SK-N-SH (cell line): ENCODE measurements at regions of chr15 and their contacts with region 1.

Region 1: GRCh38 chr15:85504749-85505676 is 124.6 kb downstream of the AKAP13 start:
- DNase-seq: peak; percentile 24
- H3K4me3 ChIP-seq: no peak overlapping the region
- H3K27ac ChIP-seq: peak overlapping the region; percentile 9 to 54; a peak in 3 of 4 replicates
- H3K4me1 ChIP-seq: peaks cover 0 to 15% of the 10 kb centered on the region in 2 experiments; a peak in 2 of 4 replicates
- H3K27me3 ChIP-seq: no peaks in the 10 kb centered on the region
- CTCF ChIP-seq: peak; percentile 82
- EP300 ChIP-seq: no peak
- RAD21 ChIP-seq: peak; percentile 74

Region 2: DNA sequence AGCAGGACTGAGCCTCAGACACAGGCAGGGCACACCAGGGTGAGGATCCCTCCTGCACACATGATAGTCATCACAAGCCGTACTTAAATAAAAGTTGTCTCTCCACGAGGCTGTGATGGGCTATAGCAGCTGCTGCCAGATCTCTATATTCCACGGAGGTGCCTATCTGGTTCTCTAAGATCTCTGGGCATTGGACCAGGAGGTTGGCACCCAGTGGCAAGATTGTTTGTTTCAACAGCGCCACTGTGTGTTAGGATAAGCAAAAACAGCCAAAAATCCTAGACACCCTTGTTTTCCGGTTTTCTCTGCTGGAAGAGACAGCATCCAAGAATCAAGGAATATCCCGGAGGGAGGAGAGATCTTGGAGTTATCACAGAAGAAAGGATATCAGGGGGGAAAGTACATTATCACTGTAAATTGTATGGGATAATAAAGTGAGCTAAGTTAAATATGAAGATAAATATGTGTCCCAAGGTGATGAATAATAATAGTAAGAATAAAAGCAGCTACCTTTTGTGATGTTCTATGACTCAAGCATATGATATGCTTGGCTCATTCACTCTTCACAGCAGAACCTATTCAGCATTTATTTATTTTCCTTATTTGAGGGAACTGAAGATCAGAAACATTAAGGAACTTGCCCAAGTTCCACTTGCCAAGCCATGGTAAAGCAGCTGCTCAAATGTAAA is 215.2 kb before region 1 on chr15:
- CTCF ChIA-PET with region 1: interaction called, 21 read pairs
- POLR2A ChIA-PET with region 1: no interaction called
- DNase-seq: peak; percentile 79
- H3K4me3 ChIP-seq: no peak overlapping the region; a peak in 1 of 4 replicates
- H3K27ac ChIP-seq: no peak overlapping the region
- H3K4me1 ChIP-seq: peaks cover 0 to 3% of the 10 kb centered on the region in 2 experiments; a peak in 1 of 4 replicates
- H3K27me3 ChIP-seq: no peaks in the 10 kb centered on the region; the same call in 1 of the 2 replicates
- CTCF ChIP-seq: peak; percentile 72
- EP300 ChIP-seq: no peak
- RAD21 ChIP-seq: peak; percentile 89

Region 3: DNA sequence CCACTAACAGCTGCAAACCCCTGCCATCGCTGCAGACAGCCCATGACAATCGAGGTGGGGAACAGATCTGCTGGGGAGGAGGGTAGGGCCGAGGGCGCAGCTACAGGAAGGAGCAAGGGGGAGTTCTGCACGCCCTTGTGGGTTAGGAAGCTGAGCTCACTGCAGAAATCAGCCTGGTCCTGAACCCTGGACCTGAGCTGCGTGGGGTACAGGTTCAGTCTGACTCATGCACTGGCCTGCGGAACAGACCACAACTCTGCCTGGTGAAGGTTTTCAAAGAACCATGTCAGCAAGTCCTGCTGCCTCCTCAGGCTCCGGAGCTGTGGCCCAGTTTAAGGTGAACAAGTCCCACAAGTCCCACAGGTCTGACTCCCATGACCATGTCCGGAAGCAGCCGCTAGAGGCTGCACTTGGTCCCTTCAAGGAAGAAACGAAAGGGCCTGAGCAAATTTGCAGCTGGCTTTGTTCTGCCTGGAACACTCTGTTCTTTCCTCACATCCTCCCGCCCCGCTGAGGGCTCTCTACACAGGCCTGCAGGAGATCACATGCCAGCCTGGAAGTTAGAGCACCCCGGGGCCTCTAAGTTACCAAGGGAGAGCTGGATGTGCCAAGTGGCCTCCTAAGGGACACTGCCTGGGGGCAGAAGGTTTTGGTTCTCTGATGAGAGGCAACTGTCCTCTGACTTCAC is 174.0 kb before region 1 on chr15:
- CTCF ChIA-PET with region 1: interaction called, 10 read pairs
- POLR2A ChIA-PET with region 1: no interaction called
- DNase-seq: peak; percentile 52
- H3K4me3 ChIP-seq: no peak overlapping the region; a peak in 1 of 4 replicates
- H3K27ac ChIP-seq: peak overlapping the region; percentile 35 to 45; a peak in 1 of 4 replicates
- H3K4me1 ChIP-seq: peaks cover 17% of the 10 kb centered on the region in 2 experiments; a peak in 3 of 4 replicates
- H3K27me3 ChIP-seq: no peaks in the 10 kb centered on the region
- CTCF ChIP-seq: peak; percentile 82
- EP300 ChIP-seq: no peak
- RAD21 ChIP-seq: peak; percentile 79

Region 4: DNA sequence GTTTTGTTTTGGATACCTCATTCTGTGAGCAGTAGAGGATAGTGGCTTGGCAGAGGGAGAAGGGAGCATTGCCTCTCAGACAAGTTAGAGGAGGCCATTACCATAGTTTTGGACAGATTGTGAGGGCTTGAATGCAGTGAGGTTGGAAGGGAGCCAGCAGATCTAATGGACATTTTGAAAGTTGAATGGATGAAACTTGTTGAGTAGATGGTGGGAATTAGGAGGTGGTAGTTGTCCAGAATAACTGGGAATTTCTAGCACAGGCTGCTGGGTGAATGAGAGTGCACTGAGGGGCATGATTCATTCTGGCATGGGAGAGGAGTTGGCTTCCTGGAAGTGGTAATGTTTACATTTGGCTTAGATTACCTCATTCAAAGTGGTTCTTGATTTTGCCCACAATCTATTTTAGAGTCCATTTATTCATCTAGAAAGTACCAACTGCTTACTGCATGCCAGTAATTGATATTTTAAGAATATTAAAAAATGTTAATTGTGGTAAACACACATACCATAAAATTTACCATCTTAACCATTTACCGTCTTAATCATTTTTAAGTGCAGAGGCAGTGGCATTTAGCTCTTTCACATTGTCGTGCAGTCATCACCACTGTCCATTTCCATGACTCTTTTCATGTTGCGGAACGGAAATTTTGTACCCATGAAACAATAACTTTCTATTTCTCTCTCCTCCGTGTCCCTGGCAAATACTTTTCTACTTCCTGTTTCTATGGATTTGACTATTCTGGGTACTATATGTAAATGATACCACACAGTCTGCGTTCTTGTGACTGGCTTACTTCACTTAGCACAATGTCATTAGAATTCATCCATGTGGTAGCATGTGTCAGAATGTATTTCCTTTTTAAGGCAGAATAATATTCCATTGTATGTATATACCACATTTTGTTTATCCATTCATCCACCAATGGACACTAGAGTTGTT is 96.9 kb before region 1 on chr15:
- CTCF ChIA-PET with region 1: no interaction called
- POLR2A ChIA-PET with region 1: no interaction called
- DNase-seq: no peak
- H3K4me3 ChIP-seq: no peak overlapping the region
- H3K27ac ChIP-seq: peak overlapping the region in 1 of 2 experiments; percentile 93; a peak in 2 of 4 replicates
- H3K4me1 ChIP-seq: peaks cover 5 to 43% of the 10 kb centered on the region in 2 experiments
- H3K27me3 ChIP-seq: no peaks in the 10 kb centered on the region
- CTCF ChIP-seq: no peak
- EP300 ChIP-seq: peak; percentile 10 to 50; a peak in 1 of 4 replicates
- RAD21 ChIP-seq: no peak

Region 5: DNA sequence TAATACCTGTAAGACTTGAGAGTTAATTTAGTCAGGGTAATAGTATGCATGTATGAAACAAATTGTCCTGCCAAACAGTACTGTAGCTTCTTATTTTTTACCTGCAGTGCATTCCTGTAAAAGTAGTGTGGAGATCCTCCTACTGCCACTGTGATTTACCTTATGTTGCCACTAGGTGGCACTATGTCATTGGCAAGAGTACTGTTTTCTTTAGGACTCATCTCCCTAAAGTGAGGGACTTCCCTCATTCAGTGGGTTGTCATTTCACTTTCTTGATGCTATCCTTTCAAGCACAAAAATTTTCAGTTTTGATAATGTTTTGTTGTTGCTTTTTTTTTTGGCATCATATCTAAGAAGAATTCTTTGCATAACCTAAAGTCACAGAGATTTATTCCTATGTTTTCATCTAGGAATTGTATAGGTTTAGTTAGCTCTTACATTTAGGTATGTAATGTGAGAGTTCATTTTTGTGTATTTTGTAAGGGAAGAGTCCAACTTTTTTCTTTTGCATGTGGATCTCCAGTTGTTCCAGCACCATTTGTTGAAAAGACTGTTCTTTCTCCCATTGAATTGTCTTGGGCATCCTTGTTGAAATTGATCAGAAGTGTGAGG is 19.0 kb before region 1 on chr15:
- CTCF ChIA-PET with region 1: interaction called, 97 read pairs
- POLR2A ChIA-PET with region 1: no interaction called
- DNase-seq: peak; percentile 61
- H3K4me3 ChIP-seq: no peak overlapping the region; a peak in 1 of 4 replicates
- H3K27ac ChIP-seq: no peak overlapping the region; a peak in 1 of 4 replicates
- H3K4me1 ChIP-seq: peaks cover 8 to 16% of the 10 kb centered on the region in 2 experiments; a peak in 2 of 4 replicates
- H3K27me3 ChIP-seq: no peaks in the 10 kb centered on the region
- CTCF ChIP-seq: peak; percentile 86
- EP300 ChIP-seq: no peak
- RAD21 ChIP-seq: peak; percentile 81

Region 6: DNA sequence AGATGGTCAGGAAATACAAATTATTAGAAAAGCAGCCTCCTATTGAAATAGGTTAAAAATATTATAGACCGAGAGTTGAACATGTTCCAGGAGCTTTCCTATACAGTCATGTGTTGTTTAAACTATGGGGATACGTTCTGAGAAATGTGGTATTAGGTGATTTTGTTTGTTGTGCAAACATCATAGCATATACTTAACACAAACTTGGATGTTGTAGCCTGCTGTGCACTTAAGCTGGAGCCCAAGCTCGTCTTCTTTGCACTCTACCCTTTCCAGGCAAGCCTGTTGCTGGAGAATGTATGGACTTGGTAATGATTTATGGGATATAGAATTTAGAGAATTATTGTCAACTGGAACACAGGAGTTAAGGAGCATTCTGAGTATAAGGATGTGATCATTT is 15.6 kb after region 1 on chr15:
- CTCF ChIA-PET with region 1: interaction called, 12 read pairs
- POLR2A ChIA-PET with region 1: no interaction called
- DNase-seq: no peak
- H3K4me3 ChIP-seq: no peak overlapping the region
- H3K27ac ChIP-seq: no peak overlapping the region
- H3K4me1 ChIP-seq: no peaks in the 10 kb centered on the region
- H3K27me3 ChIP-seq: no peaks in the 10 kb centered on the region
- CTCF ChIP-seq: no peak
- EP300 ChIP-seq: no peak
- RAD21 ChIP-seq: no peak

Region 7: DNA sequence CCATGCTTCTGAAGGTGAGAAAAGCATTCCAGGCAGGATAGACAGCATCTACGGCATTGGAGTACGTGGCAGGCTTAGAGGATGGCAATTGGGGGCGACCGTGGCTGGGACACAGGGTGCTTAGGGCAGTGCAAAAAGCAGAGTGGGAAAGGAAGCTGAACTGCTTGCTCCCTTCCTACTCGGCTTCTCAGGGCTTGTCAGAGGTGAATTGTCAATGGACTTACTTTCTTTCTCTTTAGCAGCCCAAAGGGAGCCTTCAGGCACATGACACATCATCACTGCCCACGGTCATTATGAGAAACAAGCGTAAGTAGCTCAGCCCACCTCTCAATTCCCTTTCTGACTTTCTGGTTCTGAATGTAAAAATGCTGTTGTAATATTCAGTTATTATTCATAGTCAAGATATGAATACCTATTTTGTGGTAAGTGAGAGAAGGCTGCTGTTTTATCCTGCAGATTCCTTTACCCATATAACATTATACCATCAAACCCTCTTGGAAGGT is 205.4 kb after region 1 on chr15:
- CTCF ChIA-PET with region 1: no interaction called
- POLR2A ChIA-PET with region 1: no interaction called
- DNase-seq: no peak
- H3K4me3 ChIP-seq: no peak overlapping the region
- H3K27ac ChIP-seq: no peak overlapping the region
- H3K4me1 ChIP-seq: peaks cover 0 to 19% of the 10 kb centered on the region in 2 experiments; a peak in 3 of 4 replicates
- H3K27me3 ChIP-seq: no peaks in the 10 kb centered on the region
- CTCF ChIP-seq: no peak
- EP300 ChIP-seq: no peak
- RAD21 ChIP-seq: no peak

Region 8: GRCh38 chr15:85964471-85964870 is 459.5 kb after region 1 on chr15:
- CTCF ChIA-PET with region 1: no interaction called
- POLR2A ChIA-PET with region 1: no interaction called
- DNase-seq: no peak
- H3K4me3 ChIP-seq: no peak overlapping the region
- H3K27ac ChIP-seq: no peak overlapping the region
- H3K4me1 ChIP-seq: no peaks in the 10 kb centered on the region
- H3K27me3 ChIP-seq: no peaks in the 10 kb centered on the region
- CTCF ChIP-seq: no peak
- EP300 ChIP-seq: no peak
- RAD21 ChIP-seq: no peak